ENCODE measurements at regions of chr5 and their contacts with region 1.

Region 1: DNA sequence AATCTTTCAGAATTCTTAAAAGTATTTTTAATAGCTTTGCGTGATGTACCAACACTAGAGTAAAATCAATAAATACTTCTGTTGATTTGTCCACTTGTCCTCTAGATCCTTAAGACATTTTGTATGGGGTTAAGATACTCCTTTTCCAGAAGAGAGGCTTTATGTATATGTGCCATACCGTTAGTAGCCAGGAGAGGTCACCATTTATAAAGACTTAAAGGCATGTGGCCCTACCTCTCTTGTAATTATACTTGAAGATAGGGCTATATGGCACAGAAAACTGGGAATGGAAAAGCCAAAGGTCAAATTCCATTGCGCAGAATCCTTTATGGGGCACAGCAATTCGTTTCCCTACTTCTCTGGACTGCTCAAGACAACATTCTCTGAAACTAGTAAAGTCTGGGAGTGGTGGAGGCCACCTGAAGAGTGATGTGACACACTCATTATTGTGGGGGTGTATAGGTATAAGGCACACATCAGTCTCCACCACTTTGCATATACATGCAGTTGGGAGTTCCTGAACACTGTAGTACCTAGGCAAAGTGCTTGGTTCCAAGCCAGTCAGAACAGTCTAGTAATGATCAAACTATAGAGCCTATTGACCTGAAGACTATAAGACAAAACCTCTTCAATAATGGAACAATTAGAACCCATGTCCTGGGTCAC is 140.1 kb upstream of the FBXL17 start:
- DNase-seq: peak; percentile 71
- H3K4me3 ChIP-seq: no peak overlapping the region
- H3K27ac ChIP-seq: no peak overlapping the region
- H3K4me1 ChIP-seq: no peaks in the 10 kb centered on the region
- H3K27me3 ChIP-seq: no peaks in the 10 kb centered on the region
- CTCF ChIP-seq: peak; percentile 50 to 54
- POLR2A ChIP-seq: no peak

Region 2: GRCh38 chr5:108487951-108488350 is 34.0 kb before region 1 on chr5:
- CTCF ChIA-PET with region 1: no interaction called
- POLR2A ChIA-PET with region 1: no interaction called
- dilution Hi-C with region 1: no loop called
- intact Hi-C with region 1: no loop called
- DNase-seq: no peak
- H3K4me3 ChIP-seq: no peak overlapping the region
- H3K27ac ChIP-seq: no peak overlapping the region
- H3K4me1 ChIP-seq: no peaks in the 10 kb centered on the region
- H3K27me3 ChIP-seq: no peaks in the 10 kb centered on the region
- CTCF ChIP-seq: no peak
- POLR2A ChIP-seq: no peak

Region 3: DNA sequence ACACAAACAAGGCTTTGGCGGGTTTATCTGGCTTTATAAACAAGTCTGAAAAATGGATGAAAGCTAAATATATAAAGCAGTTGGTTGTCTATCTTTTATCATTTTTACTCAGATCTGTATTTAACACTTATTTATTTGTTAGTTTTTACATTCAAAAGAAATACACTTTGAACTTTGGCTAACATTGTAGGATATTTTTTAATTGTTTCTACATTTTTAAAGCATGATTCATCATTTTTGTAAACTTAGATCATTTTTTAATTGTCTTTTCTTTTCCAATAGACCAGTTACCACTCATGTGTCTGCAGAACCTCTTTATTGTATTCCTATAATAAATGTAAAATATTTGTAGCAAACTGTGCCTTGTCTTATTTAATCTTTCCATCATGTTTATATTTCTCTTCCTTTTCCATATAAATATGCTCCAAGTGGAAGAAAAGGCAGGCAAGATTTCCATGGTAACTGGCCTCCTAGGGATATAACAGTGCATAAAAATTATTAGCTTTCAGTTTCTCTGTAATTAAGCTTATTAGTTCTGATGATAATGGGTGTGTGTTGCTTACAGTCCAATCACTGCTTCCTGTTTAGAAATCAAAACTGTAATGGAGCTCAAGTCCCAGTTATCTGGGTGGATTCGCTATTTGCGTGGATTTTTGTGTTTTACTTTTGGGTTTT is 674.6 kb after region 1 on chr5:
- CTCF ChIA-PET with region 1: no interaction called
- POLR2A ChIA-PET with region 1: no interaction called
- dilution Hi-C with region 1: no loop called
- intact Hi-C with region 1: loop called (anchors 5 kb)
- DNase-seq: peak; percentile 53
- H3K4me3 ChIP-seq: no peak overlapping the region
- H3K27ac ChIP-seq: peak overlapping the region; percentile 59
- H3K4me1 ChIP-seq: peaks cover 18% of the 10 kb centered on the region
- H3K27me3 ChIP-seq: no peaks in the 10 kb centered on the region
- CTCF ChIP-seq: no peak
- POLR2A ChIP-seq: no peak

Region 4: GRCh38 chr5:109479260-109479860 is 957.4 kb after region 1 on chr5:
- CTCF ChIA-PET with region 1: no interaction called
- POLR2A ChIA-PET with region 1: no interaction called
- dilution Hi-C with region 1: no loop called
- intact Hi-C with region 1: loop called (anchors 1 kb)
- DNase-seq: peak; percentile 40
- H3K4me3 ChIP-seq: no peak overlapping the region
- H3K27ac ChIP-seq: no peak overlapping the region
- H3K4me1 ChIP-seq: no peaks in the 10 kb centered on the region
- H3K27me3 ChIP-seq: no peaks in the 10 kb centered on the region
- CTCF ChIP-seq: peak; percentile 23 to 25
- POLR2A ChIP-seq: no peak

Measured in endothelial cell of umbilical vein (primary cell).